Activated CD4-positive, alpha-beta T cell treated with anti-CD3 and anti-CD28 coated beads for 36 hours (primary cell): ENCODE measurements at regions of chr1 and their contacts with region 1.

Region 1: GRCh38 chr1:203038891-203039608 is 12.8 kb downstream of the PPFIA4 start:
- DNase-seq: peak; percentile 77
- ATAC-seq: peak; percentile 85
- H3K4me3 Mint-ChIP-seq: no peak overlapping the region
- H3K27ac Mint-ChIP-seq: no peak overlapping the region
- H3K4me1 Mint-ChIP-seq: peaks cover 4% of the 10 kb centered on the region
- H3K27me3 Mint-ChIP-seq: peaks cover 4% of the 10 kb centered on the region

Region 2: GRCh38 chr1:202160377-202160940 is 878.6 kb before region 1 on chr1 and contains the start of gene PTPN7:
- CTCF ChIA-PET with region 1: no interaction called
- POLR2A ChIA-PET with region 1: no interaction called
- intact Hi-C with region 1: no loop called
- DNase-seq: peak; percentile 98
- ATAC-seq: peak; percentile 69
- H3K4me3 Mint-ChIP-seq: peak within 1 kb of the TSS; percentile 97
- H3K27ac Mint-ChIP-seq: peak within 1 kb of the TSS; percentile 99
- H3K4me1 Mint-ChIP-seq: peaks cover 80% of the 10 kb centered on the region
- H3K27me3 Mint-ChIP-seq: no peaks in the 10 kb centered on the region
- total RNA-seq, gene PTPN7: 188 to 221 TPM

Region 3: GRCh38 chr1:203057911-203058675 is 19.0 kb after region 1 on chr1:
- CTCF ChIA-PET with region 1: interaction called, 19 read pairs
- POLR2A ChIA-PET with region 1: no interaction called
- intact Hi-C with region 1: no loop called
- DNase-seq: no peak
- ATAC-seq: no peak
- H3K4me3 Mint-ChIP-seq: no peak overlapping the region
- H3K27ac Mint-ChIP-seq: no peak overlapping the region
- H3K4me1 Mint-ChIP-seq: no peaks in the 10 kb centered on the region
- H3K27me3 Mint-ChIP-seq: peaks cover 3% of the 10 kb centered on the region

Region 4: DNA sequence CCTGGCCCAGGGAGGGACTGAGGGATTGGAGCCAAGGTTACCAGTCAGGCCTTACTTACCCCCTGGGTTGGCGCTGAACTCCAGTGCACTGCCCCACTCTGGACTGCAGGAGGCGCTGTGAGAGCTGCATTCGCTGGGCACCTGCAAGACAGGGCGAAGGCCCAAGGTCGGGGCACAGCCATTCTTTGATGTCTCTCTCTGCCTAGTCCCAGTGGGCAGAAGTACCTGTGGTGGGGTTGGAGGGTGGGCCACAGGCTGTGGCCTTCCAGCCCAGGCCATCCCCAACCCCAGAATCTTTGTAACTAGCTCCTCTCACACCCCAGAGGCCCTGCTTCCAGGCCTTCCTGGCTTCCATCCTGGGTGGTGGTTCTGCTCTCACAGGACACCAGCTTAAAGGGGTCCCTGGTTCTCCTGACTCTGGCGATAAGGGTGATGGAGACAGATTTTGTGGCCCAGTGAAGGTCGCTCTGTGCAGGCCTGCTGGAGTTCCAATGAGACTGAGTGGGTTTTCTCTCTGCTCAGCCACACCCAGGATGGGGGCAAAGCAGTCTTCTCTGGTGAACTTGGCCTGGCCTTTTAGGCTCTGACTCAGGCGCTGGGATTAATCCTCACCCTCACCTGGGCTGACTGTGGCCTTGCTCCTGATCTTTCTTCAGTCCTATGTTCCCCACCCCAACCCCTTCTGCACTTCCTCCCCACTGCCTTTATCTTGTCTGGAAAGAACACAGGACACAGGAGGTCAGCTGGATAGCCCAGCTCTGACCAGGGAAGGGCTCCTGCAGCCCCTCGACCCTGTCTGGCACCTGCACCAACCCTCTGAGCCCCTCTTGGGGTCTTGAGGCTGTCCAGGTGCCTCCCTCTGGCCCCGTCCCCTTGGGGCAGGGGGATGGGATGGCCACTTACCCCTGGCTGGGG is 45.8 kb after region 1 on chr1:
- CTCF ChIA-PET with region 1: interaction called, 14 read pairs
- POLR2A ChIA-PET with region 1: no interaction called
- intact Hi-C with region 1: no loop called
- DNase-seq: peak; percentile 71
- ATAC-seq: peak; percentile 68
- H3K4me3 Mint-ChIP-seq: no peak overlapping the region
- H3K27ac Mint-ChIP-seq: no peak overlapping the region
- H3K4me1 Mint-ChIP-seq: no peaks in the 10 kb centered on the region
- H3K27me3 Mint-ChIP-seq: peaks cover 2% of the 10 kb centered on the region